ENCODE measurements at regions of chr11 and their contacts with region 1.

Region 1: GRCh38 chr11:62931499-62932278 is 10.5 kb upstream of the CHRM1 start:
- DNase-seq: no peak
- H3K4me3 ChIP-seq: no peak overlapping the region
- H3K27ac ChIP-seq: no peak overlapping the region
- H3K4me1 ChIP-seq: no peaks in the 10 kb centered on the region
- H3K27me3 ChIP-seq: no peaks in the 10 kb centered on the region
- CTCF ChIP-seq: no peak
- EP300 ChIP-seq: no peak
- POLR2A ChIP-seq: no peak

Region 2: GRCh38 chr11:62999649-63000048 is 68.0 kb after region 1 on chr11:
- intact Hi-C with region 1: loop called in 1 of 4 experiments (anchors 5 kb)
- DNase-seq: no peak
- H3K4me3 ChIP-seq: no peak overlapping the region
- H3K27ac ChIP-seq: no peak overlapping the region
- H3K4me1 ChIP-seq: no peaks in the 10 kb centered on the region
- H3K27me3 ChIP-seq: no peaks in the 10 kb centered on the region
- CTCF ChIP-seq: no peak
- EP300 ChIP-seq: no peak
- POLR2A ChIP-seq: no peak

Region 3: GRCh38 chr11:64331557-64332371 is 1400.1 kb after region 1 on chr11:
- intact Hi-C with region 1: no loop called
- DNase-seq: peak in 3 of 5 donors; percentile 53 to 78 (median 68)
- H3K4me3 ChIP-seq: no peak overlapping the region
- H3K27ac ChIP-seq: no peak overlapping the region
- H3K4me1 ChIP-seq: peaks cover 9% of the 10 kb centered on the region
- H3K27me3 ChIP-seq: no peaks in the 10 kb centered on the region
- CTCF ChIP-seq: peak in 1 of 3 donors; percentile 11
- EP300 ChIP-seq: no peak
- POLR2A ChIP-seq: no peak